ENCODE measurements at regions of chr1 and their contacts with region 1.

Region 1: DNA sequence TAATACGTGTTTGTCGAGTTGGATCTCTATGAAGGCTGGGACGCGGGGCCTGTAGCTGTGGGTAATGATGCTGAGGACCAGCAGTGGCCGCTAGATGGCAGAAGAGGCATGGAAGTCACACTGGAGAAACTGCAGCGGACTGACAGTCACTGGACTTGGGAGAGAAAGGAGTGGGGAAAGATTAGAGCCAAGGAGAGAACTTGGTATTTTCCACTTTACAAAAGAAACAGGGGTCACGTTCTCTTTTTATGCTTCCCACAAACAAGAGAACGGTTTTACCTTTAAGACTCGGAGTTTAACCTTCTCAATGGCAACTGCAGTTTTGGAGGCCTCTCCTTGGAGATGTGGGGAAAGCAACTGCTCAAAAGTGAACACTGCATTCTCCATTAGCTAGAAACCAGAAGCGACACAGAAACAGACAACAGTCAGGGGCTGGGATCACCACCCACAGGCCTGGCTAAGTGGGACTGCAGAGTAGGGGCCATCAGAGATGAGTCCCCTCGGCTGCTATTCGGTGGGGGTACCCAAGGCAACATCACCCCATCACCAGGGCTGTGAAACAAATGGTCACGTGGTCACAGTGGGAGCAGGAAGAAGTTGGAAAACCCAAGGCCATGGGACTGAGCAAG is 51.1 kb upstream of the EDEM3 start:
- DNase-seq: peak; percentile 95
- H3K4me3 ChIP-seq: no peak overlapping the region
- H3K27ac ChIP-seq: peak overlapping the region; percentile 44 to 69 (median 63)
- H3K4me1 ChIP-seq: peaks cover 0 to 49% (median 27%) of the 10 kb centered on the region in 4 donors
- H3K27me3 ChIP-seq: no peaks in the 10 kb centered on the region
- CTCF ChIP-seq: peak; percentile 84 to 98 (median 96)
- EP300 ChIP-seq: no peak
- POLR2A ChIP-seq: no peak

Region 2: DNA sequence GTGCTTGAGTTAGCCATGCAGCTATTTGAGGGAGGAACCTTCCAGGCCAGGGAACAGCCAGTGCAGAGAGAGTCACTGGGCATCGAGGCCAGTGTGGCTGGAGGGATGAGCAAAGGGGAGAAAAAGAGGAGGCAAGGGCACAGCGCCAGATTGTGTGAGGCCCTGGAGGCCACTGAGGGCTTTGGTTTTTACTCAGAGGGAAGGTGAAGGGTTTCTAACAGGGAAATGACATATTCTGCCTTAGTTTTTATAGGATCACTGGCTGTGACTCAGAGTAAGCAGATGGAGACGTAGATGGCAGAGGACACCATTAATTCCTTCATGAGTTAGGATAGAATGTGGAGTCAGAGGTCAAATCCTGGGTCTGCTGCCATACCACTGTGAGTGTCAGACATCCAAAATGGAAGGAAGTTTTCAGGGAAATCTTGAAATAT is 386.0 kb before region 1 on chr1:
- intact Hi-C with region 1: no loop called
- DNase-seq: no peak
- H3K4me3 ChIP-seq: no peak overlapping the region
- H3K27ac ChIP-seq: no peak overlapping the region
- H3K4me1 ChIP-seq: peaks cover 0 to 35% (median 21%) of the 10 kb centered on the region in 4 donors
- H3K27me3 ChIP-seq: no peaks in the 10 kb centered on the region
- CTCF ChIP-seq: no peak
- EP300 ChIP-seq: no peak
- POLR2A ChIP-seq: no peak

Region 3: GRCh38 chr1:184754476-184755225 is 51.1 kb before region 1 on chr1 and contains the start of gene EDEM3:
- intact Hi-C with region 1: loop called (anchors 5 kb)
- DNase-seq: peak; percentile 100
- H3K4me3 ChIP-seq: peak within 1 kb of the TSS; percentile 80 to 96 (median 93)
- H3K27ac ChIP-seq: peak within 1 kb of the TSS; percentile 93 to 98 (median 96)
- H3K4me1 ChIP-seq: peaks cover 0 to 24% (median 15%) of the 10 kb centered on the region in 4 donors
- H3K27me3 ChIP-seq: no peaks in the 10 kb centered on the region
- CTCF ChIP-seq: no peak
- EP300 ChIP-seq: no peak
- POLR2A ChIP-seq: peak; percentile 92 to 97
- total RNA-seq, gene EDEM3: 21.4 to 29.3 (median 25.6) TPM

Region 4: GRCh38 chr1:184910691-184911091 is 104.9 kb after region 1 on chr1:
- intact Hi-C with region 1: no loop called
- DNase-seq: peak; percentile 90
- H3K4me3 ChIP-seq: no peak overlapping the region
- H3K27ac ChIP-seq: peak overlapping the region in 3 of 4 donors; percentile 17 to 52 (median 43)
- H3K4me1 ChIP-seq: peaks cover 0 to 100% (median 80%) of the 10 kb centered on the region in 4 donors
- H3K27me3 ChIP-seq: no peaks in the 10 kb centered on the region
- CTCF ChIP-seq: no peak
- EP300 ChIP-seq: no peak
- POLR2A ChIP-seq: no peak

Region 5: DNA sequence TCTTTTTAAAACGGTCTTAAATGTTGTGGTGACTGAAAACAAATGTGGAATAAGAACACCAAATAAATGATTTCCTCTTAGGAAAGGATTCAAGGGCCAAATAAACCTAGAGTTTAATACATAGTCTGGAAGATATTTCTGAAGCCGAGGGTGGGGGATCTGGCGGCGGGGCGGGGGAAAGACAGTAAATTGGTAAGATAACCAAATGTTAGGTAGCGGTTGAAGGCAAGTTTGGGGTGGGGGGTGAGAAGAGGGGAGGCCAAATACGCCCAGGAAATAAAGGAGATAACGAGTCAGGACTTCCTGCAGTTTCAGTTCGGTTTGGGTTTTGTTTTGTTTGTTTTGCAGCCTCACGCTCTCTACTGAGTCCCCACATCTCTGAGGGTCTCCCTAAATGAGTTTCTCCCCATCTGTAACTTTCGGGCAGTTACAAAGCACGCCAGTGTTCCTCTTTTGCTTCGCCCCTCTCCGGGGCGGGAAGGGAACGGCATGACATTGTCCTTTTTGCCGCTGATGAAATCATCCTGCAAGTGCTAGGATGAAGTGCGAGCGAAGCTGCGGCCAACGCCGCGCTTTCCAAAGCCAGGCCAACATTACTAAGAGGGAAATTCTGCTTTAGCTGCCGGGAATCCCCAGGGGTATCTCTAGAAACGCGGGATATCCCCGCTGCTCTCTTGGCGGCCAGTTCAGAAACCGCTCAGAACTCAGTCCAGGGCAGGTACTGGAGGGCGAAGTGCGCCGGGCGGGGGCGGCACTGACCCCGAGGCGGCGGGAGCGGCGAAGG is 167.7 kb after region 1 on chr1:
- intact Hi-C with region 1: loop called (anchors 2 kb)
- DNase-seq: peak; percentile 76
- H3K4me3 ChIP-seq: peak overlapping the region; percentile 81 to 99 (median 92)
- H3K27ac ChIP-seq: peak overlapping the region; percentile 87 to 96 (median 94)
- H3K4me1 ChIP-seq: peaks cover 0 to 39% (median 36%) of the 10 kb centered on the region in 4 donors
- H3K27me3 ChIP-seq: no peaks in the 10 kb centered on the region
- CTCF ChIP-seq: peak in 1 of 4 experiments; percentile 9
- EP300 ChIP-seq: no peak
- POLR2A ChIP-seq: no peak

Region 6: GRCh38 chr1:184982002-184982954 is 176.5 kb after region 1 on chr1:
- intact Hi-C with region 1: loop called (anchors 1 kb)
- DNase-seq: peak; percentile 91
- H3K4me3 ChIP-seq: no peak overlapping the region
- H3K27ac ChIP-seq: peak overlapping the region in 1 of 4 donors; percentile 55
- H3K4me1 ChIP-seq: peaks cover 0 to 10% (median 4%) of the 10 kb centered on the region in 4 donors
- H3K27me3 ChIP-seq: no peaks in the 10 kb centered on the region
- CTCF ChIP-seq: peak; percentile 87 to 91 (median 89)
- EP300 ChIP-seq: no peak
- POLR2A ChIP-seq: no peak

Region 7: GRCh38 chr1:185044981-185045813 is 239.4 kb after region 1 on chr1 and contains the start of gene RNF2:
- intact Hi-C with region 1: loop called (anchors 2 kb)
- DNase-seq: peak; percentile 89
- H3K4me3 ChIP-seq: peak within 1 kb of the TSS; percentile 82 to 93 (median 88)
- H3K27ac ChIP-seq: peak within 1 kb of the TSS; percentile 90 to 96 (median 92)
- H3K4me1 ChIP-seq: peaks cover 0 to 19% (median 16%) of the 10 kb centered on the region in 4 donors
- H3K27me3 ChIP-seq: no peaks in the 10 kb centered on the region
- CTCF ChIP-seq: no peak
- EP300 ChIP-seq: no peak
- POLR2A ChIP-seq: no peak
- total RNA-seq, gene RNF2: 11.1 to 17.1 (median 16.7) TPM

Region 8: DNA sequence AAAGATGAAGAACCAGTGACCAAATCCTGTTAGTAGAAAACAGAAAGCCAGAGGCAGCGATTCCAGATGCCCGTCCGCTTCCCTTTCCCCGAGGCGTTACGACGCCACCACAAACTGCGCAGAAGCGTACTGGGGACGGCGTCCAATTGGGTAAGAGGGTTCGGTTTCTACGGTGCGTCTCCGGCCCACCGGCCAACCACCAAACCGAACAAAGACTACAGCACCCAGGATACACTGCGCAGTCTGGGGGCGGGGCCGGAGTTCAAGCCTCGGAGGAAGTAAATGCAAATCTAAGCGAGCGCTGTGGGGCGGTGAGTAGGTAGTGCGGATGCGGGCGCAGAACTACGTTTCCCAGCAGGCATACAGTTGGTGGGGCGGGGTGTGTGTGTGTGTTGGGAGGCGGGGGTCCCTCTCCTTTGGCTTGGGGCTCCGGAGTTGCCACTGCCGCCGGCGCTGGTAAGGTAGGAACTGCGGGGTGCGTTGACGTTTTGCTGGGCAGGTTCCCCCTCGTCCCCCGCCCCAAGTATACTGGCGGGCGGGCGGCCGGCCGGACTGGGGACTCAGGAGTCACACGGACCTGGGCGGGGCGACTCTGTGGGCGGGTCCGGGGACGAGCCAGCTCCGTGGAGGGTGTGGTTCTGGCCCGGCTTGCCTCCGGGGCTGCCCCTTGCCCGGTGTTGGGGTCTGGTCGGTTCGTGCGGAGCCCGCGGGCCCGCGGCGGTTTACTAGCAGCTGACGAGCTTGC is 351.2 kb after region 1 on chr1 and contains the starts of genes SWT1 and TRMT1L:
- intact Hi-C with region 1: loop called (anchors 5 kb)
- DNase-seq: peak; percentile 100
- H3K4me3 ChIP-seq: peak within 1 kb of the TSS; percentile 79 to 92 (median 85)
- H3K27ac ChIP-seq: peak within 1 kb of the TSS; percentile 97 to 99 (median 99)
- H3K4me1 ChIP-seq: peaks cover 0 to 34% (median 24%) of the 10 kb centered on the region in 4 donors
- H3K27me3 ChIP-seq: no peaks in the 10 kb centered on the region
- CTCF ChIP-seq: no peak
- EP300 ChIP-seq: peak in 1 of 4 donors; percentile 39
- POLR2A ChIP-seq: peak; percentile 99 to 100
- total RNA-seq, gene SWT1: 6.8 to 12.7 (median 11.7) TPM
- total RNA-seq, gene TRMT1L: 6.9 to 18.6 (median 14.6) TPM